Vagina (tissue), 2 donors: ENCODE measurements at regions of chr10 and their contacts with region 1.

Region 1: GRCh38 chr10:80649183-80649582 is 111.5 kb downstream of the SH2D4B start:
- DNase-seq: no peak
- H3K4me3 ChIP-seq: no peak overlapping the region
- H3K27ac ChIP-seq: no peak overlapping the region
- H3K4me1 ChIP-seq: no peaks in the 10 kb centered on the region
- H3K27me3 ChIP-seq: no peaks in the 10 kb centered on the region
- CTCF ChIP-seq: no peak
- POLR2A ChIP-seq: no peak

Region 2: GRCh38 chr10:80674809-80675208 is 25.6 kb after region 1 on chr10:
- intact Hi-C with region 1: loop called (anchors 1 kb)
- DNase-seq: no peak
- H3K4me3 ChIP-seq: no peak overlapping the region
- H3K27ac ChIP-seq: no peak overlapping the region
- H3K4me1 ChIP-seq: no peaks in the 10 kb centered on the region
- H3K27me3 ChIP-seq: no peaks in the 10 kb centered on the region
- CTCF ChIP-seq: no peak
- POLR2A ChIP-seq: no peak

Region 3: GRCh38 chr10:80769700-80770160 is 120.5 kb after region 1 on chr10:
- intact Hi-C with region 1: no loop called
- DNase-seq: no peak
- H3K4me3 ChIP-seq: no peak overlapping the region
- H3K27ac ChIP-seq: no peak overlapping the region
- H3K4me1 ChIP-seq: no peaks in the 10 kb centered on the region
- H3K27me3 ChIP-seq: no peaks in the 10 kb centered on the region
- CTCF ChIP-seq: no peak
- POLR2A ChIP-seq: no peak